ENCODE measurements at regions of chr5 and their contacts with region 1.

Region 1: GRCh38 chr5:129631961-129632360 is 115.9 kb upstream of the MINAR2 start:
- DNase-seq: no peak
- ATAC-seq: no peak

Region 2: DNA sequence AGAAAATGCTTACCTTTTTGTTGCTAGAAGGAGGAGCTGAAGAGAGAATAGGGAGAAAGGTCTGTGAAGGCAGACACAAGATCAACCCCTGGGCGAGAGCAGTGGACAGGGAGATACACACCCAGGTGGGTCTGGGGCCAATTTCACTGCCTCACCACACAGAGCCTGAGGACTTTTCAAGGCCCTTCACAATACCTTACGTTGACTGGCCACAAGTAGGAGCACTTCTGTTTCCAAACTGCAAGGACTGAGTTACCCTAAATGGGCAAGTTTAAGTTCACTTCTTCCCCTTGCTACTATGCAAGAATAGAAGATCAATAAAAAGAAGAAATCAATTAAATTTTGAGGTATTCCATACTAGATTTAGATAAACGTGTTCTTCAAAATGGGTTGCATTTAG is 1722.9 kb before region 1 on chr5:
- intact Hi-C with region 1: loop called (anchors 5 kb)
- DNase-seq: no peak
- ATAC-seq: peak; percentile 57